AG04450 (cell line): ENCODE measurements at regions of chr1 and their contacts with region 1.

Region 1: GRCh38 chr1:241870290-241870689 is 22.3 kb downstream of the EXO1 start:
- DNase-seq: no peak
- H3K4me3 ChIP-seq: no peak overlapping the region
- H3K27ac ChIP-seq: no peak overlapping the region
- H3K27me3 ChIP-seq: no peaks in the 10 kb centered on the region
- CTCF ChIP-seq: no peak

Region 2: DNA sequence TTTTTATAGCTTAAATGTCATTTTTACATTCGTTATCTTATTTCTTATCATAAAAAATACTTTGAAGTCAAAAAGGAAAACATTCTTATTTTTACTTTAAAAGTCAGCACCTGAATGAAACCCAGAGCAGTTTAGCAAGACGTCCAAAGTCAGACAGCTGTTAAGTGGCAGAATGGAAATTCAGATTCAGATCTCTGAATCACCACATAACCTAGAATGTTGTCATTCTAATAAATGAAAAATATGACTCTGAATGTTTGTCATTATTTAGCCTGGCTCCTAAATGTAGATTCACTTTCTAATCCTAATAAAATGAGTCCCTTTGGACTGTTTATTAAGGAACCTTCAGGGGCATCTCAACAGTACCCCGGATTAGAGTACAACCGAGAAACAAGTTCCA is 438.0 kb before region 1 on chr1:
- CTCF ChIA-PET with region 1: no interaction called
- POLR2A ChIA-PET with region 1: no interaction called
- DNase-seq: no peak
- H3K4me3 ChIP-seq: no peak overlapping the region
- H3K27ac ChIP-seq: no peak overlapping the region
- H3K27me3 ChIP-seq: no peaks in the 10 kb centered on the region
- CTCF ChIP-seq: no peak

Region 3: DNA sequence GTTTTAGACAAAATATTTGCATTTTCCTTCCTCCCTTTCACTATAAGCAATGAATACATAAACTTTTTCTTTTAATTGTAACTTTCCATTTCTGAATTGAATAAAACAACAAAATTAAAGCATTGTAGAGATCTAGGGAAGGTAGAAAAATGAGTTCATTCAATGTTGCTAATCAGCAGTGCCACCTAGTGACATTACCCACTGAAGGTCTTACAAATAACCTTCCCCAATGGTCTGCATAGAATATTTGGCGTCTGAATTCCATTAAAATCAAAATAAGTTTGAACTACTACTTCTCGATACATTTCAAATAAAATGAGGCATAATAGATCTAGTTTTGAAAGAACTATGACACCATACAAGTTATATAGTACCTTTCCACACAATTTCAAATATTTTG is 370.4 kb before region 1 on chr1:
- CTCF ChIA-PET with region 1: no interaction called
- POLR2A ChIA-PET with region 1: no interaction called
- DNase-seq: peak; percentile 16
- H3K4me3 ChIP-seq: no peak overlapping the region
- H3K27ac ChIP-seq: no peak overlapping the region
- H3K27me3 ChIP-seq: no peaks in the 10 kb centered on the region
- CTCF ChIP-seq: peak; percentile 61

Region 4: DNA sequence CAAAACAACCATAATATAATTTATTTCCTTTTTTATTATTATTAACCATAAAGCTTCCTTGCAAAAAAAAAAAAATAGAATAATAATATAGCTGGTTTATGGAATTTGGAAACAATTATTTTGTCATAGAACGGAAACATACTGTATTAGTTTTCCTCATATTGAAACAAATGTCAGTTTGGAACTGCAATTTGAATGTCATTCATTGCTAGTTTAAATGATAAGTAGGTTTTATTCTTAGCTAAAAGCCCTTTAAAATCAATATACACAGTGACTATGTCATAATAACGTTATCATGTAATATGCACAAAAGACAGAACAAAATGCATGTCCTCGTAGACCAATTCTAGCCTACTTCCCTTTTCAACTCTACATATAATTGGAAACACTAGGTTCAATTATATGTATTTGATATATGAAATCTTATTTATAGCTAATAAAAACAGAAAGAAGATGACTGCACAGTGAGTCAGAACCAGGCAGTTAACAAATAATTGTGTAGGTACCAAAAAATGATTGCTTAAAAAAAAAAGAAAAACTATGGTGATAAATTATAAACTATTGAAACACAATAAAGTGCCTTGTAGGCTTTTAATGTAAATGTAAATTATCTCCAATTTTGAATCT is 107.5 kb before region 1 on chr1:
- CTCF ChIA-PET with region 1: no interaction called
- POLR2A ChIA-PET with region 1: no interaction called
- DNase-seq: no peak
- H3K4me3 ChIP-seq: no peak overlapping the region
- H3K27ac ChIP-seq: no peak overlapping the region
- H3K27me3 ChIP-seq: no peaks in the 10 kb centered on the region
- CTCF ChIP-seq: no peak

Region 5: GRCh38 chr1:241847796-241848685 is 22.2 kb before region 1 on chr1 and contains the start of gene EXO1:
- CTCF ChIA-PET with region 1: no interaction called
- POLR2A ChIA-PET with region 1: interaction called, 11 read pairs
- DNase-seq: peak; percentile 69
- H3K4me3 ChIP-seq: peak within 1 kb of the TSS; percentile 90
- H3K27ac ChIP-seq: peak within 1 kb of the TSS; percentile 100
- H3K27me3 ChIP-seq: no peaks in the 10 kb centered on the region
- CTCF ChIP-seq: peak; percentile 37
- polyA plus RNA-seq, gene EXO1: 2.9 and 4.3 TPM in 2 replicates

Region 6: GRCh38 chr1:242011894-242012660 is 141.8 kb after region 1 on chr1:
- CTCF ChIA-PET with region 1: no interaction called
- POLR2A ChIA-PET with region 1: no interaction called
- DNase-seq: no peak
- H3K4me3 ChIP-seq: no peak overlapping the region
- H3K27ac ChIP-seq: no peak overlapping the region
- H3K27me3 ChIP-seq: no peaks in the 10 kb centered on the region
- CTCF ChIP-seq: no peak